ENCODE measurements at regions of chr5 and their contacts with region 1.

Region 1: DNA sequence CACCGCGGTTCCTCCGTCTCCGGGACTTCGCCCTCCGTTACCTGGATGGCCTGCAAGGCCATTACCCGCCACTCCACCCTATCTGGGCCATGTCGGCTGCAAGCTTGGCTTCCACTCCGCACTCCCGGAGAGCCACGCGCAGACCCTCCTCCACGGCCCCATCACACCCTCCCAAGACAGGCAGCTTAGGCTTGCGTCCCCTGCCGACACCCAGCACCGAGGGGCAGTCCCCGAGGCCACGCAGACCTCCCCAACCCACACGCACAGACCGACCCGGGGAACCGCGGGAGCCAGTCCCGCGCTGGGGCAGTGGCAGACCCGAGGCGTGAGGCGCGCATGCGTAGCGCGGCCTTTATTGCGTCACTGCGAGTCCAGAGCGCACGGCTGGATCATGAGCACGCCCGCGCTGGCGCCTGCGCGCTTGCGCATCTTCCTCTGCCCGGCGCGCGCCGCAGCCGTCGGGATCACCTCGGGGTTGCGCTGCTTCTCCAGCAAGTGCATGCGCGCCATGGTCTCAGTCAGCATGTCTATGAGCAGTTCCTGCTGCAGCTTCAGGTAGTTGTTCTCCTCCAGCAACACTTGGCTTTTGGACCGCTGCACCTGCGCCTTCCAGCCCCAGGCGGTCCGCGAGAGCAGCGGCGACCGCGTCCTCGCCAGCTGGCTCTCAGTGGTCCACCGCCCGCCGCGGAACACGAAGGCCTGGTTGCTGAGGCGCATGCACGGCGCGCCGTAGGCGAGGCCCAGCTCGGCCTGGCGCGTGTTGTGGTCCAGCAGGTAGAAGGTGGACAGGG is 2.4 kb downstream of the CBY3 start:
- DNase-seq: peak; percentile 64
- H3K4me3 ChIP-seq: peak overlapping the region; percentile 68
- H3K27me3 ChIP-seq: no peaks in the 10 kb centered on the region
- CTCF ChIP-seq: 0 out of 2 replicates have a peak, but pooled peaks have one; percentile 9

Region 2: DNA sequence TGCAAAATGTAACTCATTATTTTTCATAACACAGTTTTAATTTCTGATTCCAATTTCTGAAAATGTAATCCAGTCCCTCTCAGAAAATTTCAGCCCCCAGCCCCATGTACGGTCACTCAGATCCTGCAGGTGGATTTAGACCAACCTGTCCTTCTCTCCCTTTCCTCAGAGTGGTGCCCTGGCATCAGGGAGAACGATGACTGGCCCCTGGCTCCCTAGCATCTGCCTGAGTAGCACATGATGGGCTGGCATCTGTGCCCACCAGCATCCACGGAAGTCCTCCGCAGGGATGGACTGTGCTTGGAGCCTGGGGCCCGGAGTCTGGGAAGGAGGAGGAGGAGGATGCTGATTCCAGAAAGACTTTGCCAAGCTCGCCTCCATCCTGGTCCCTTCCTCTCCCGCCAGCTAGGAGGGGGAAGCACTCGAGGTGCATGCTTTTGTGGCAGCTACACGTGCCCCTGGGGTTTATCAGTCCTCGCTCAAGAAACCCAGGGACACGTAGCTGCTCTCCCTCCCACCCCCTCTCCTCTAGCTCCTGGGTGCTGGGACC is 182.4 kb before region 1 on chr5:
- CTCF ChIA-PET with region 1: no interaction called
- POLR2A ChIA-PET with region 1: no interaction called
- DNase-seq: no peak
- H3K4me3 ChIP-seq: no peak overlapping the region
- H3K27me3 ChIP-seq: no peaks in the 10 kb centered on the region
- CTCF ChIP-seq: no peak

Region 3: DNA sequence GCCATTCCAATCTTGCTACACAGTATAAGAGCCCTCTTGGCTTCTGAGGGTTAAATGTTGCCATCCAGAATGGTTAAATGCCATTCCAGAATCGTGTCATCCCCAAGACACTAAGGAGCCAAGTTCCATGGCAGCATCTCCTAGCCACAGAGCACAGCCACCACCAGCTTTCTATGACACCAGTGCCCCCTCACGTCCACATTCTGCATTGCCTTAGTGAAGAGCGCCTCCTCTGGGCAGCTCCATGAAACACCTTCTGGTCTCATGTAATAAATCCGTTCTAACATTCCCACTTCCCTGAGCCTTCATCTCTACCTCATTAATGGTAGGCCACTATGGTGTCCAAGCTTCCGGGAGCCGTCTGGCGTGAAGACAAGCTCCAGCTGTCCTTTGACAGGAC is 10.0 kb before region 1 on chr5:
- CTCF ChIA-PET with region 1: interaction called, 10 read pairs
- POLR2A ChIA-PET with region 1: no interaction called
- DNase-seq: peak; percentile 4
- H3K4me3 ChIP-seq: no peak overlapping the region
- H3K27me3 ChIP-seq: no peaks in the 10 kb centered on the region
- CTCF ChIP-seq: peak; percentile 87

Region 4: GRCh38 chr5:179697993-179698934 is 19.8 kb after region 1 on chr5:
- CTCF ChIA-PET with region 1: interaction called, 21 read pairs
- POLR2A ChIA-PET with region 1: no interaction called
- DNase-seq: peak; percentile 95
- H3K4me3 ChIP-seq: peak overlapping the region; percentile 92
- H3K27me3 ChIP-seq: no peaks in the 10 kb centered on the region
- CTCF ChIP-seq: no peak

Measured in BJ (cell line).